AG04449 (cell line): ENCODE measurements at regions of chr12 and their contacts with region 1.

Region 1: GRCh38 chr12:97308576-97309198 is 153.9 kb upstream of the RMST start:
- DNase-seq: peak; percentile 7
- H3K4me3 ChIP-seq: no peak overlapping the region
- CTCF ChIP-seq: peak; percentile 45

Region 2: DNA sequence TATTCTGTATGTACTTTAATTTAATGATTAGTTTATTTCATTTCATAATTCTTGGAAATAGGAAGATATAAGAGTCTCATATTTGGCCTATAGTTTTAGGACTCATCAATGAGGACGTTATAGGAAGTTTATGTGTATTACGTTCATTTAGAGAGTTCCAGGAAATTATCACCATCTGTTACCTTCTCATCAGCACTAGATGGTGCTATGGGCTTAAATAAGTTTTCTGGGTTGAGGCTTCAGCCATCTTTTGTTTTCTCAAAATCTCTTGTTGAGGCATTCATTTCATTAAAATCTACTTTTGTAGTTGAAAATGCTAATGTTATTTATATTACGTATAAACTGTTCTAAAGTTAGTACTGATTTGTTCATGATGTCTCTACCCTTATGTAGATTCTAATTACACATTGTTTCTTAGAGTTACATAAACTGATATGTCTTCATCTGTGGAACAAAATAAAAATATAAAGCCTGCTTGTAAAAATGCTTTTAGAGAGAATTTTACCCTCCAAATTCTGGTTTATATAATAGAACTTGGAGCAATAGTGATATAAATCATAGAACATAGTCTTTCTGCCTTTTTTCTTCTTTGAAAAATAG is 730.1 kb before region 1 on chr12:
- CTCF ChIA-PET with region 1: interaction called, 79 read pairs
- POLR2A ChIA-PET with region 1: no interaction called
- DNase-seq: no peak
- H3K4me3 ChIP-seq: no peak overlapping the region
- CTCF ChIP-seq: peak; percentile 39

Region 3: GRCh38 chr12:97260786-97261185 is 47.9 kb before region 1 on chr12:
- CTCF ChIA-PET with region 1: no interaction called
- POLR2A ChIA-PET with region 1: no interaction called
- DNase-seq: no peak
- H3K4me3 ChIP-seq: no peak overlapping the region
- CTCF ChIP-seq: no peak

Region 4: GRCh38 chr12:97275256-97275655 is 33.4 kb before region 1 on chr12:
- CTCF ChIA-PET with region 1: no interaction called
- POLR2A ChIA-PET with region 1: no interaction called
- DNase-seq: no peak
- H3K4me3 ChIP-seq: no peak overlapping the region
- CTCF ChIP-seq: no peak

Region 5: DNA sequence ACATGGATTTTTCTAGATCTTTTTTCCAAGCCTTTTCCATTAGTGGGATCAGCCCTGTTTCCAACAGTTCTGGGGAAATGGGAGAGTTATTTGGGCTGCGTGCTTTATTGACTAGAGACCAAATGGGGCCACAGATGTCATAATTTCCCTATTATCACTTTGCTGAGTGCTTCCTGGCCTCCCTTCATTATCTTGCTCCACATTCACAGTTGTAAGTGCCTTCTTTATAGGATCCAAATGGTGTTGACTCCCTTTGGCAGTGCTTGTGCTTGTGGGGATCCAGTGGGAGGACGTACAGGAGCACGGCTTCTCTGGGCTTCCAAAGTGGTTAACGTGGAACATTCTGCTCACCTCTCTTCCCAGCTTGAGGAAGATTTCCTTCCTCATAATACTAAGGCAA is 12.9 kb after region 1 on chr12:
- CTCF ChIA-PET with region 1: no interaction called
- POLR2A ChIA-PET with region 1: no interaction called
- DNase-seq: no peak
- H3K4me3 ChIP-seq: no peak overlapping the region
- CTCF ChIP-seq: no peak